ENCODE measurements at regions of chr17 and their contacts with region 1.

Region 1: GRCh38 chr17:75827252-75828115 is 16.7 kb downstream of the UNC13D start:
- DNase-seq: peak in 5 of 6 donors; percentile 51 to 86 (median 74)
- ATAC-seq: peak; percentile 53 to 78 (median 75)
- H3K4me3 ChIP-seq: peak overlapping the region in 1 of 4 donors; percentile 13
- H3K27ac ChIP-seq: peak overlapping the region; percentile 4 to 67 (median 46)
- H3K4me1 ChIP-seq: peaks cover 6 to 15% (median 6%) of the 10 kb centered on the region in 3 donors
- H3K27me3 ChIP-seq: no peaks in the 10 kb centered on the region
- CTCF ChIP-seq: peak; percentile 28 to 63 (median 47)

Region 2: GRCh38 chr17:75625813-75626486 is 201.5 kb before region 1 on chr17:
- intact Hi-C with region 1: no loop called
- DNase-seq: peak in 1 of 6 donors; percentile 63
- ATAC-seq: peak in 3 of 4 donors; percentile 35 to 61 (median 55)
- H3K4me3 ChIP-seq: no peak overlapping the region
- H3K27ac ChIP-seq: no peak overlapping the region
- H3K4me1 ChIP-seq: no peaks in the 10 kb centered on the region
- H3K27me3 ChIP-seq: no peaks in the 10 kb centered on the region
- CTCF ChIP-seq: peak in 3 of 4 donors; percentile 11 to 38 (median 35)

Region 3: GRCh38 chr17:75758117-75758926 is 69.2 kb before region 1 on chr17:
- intact Hi-C with region 1: loop called in 1 of 3 experiments (anchors 5 kb)
- DNase-seq: peak in 2 of 6 donors; percentile 30 to 72
- ATAC-seq: no peak
- H3K4me3 ChIP-seq: no peak overlapping the region
- H3K27ac ChIP-seq: no peak overlapping the region
- H3K4me1 ChIP-seq: no peaks in the 10 kb centered on the region
- H3K27me3 ChIP-seq: no peaks in the 10 kb centered on the region
- CTCF ChIP-seq: no peak

Measured in pancreas (tissue), 10 donors.